ENCODE measurements at regions of chr6 and their contacts with region 1.

Region 1: GRCh38 chr6:35522660-35523658 is 10.3 kb upstream of the TULP1 start:
- DNase-seq: peak; percentile 59
- ATAC-seq: peak; percentile 89
- H3K4me3 ChIP-seq: peak overlapping the region in 2 of 3 experiments; percentile 7 to 55; a peak in 3 of 6 replicates
- H3K27ac ChIP-seq: no peak overlapping the region
- H3K4me1 ChIP-seq: peaks cover 35% of the 10 kb centered on the region
- H3K27me3 ChIP-seq: peaks cover 4 to 27% of the 10 kb centered on the region in 2 experiments; a peak in 2 of 5 replicates
- CTCF ChIP-seq: peak; percentile 97
- EP300 ChIP-seq: no peak
- POLR2A ChIP-seq: no peak
- RAD21 ChIP-seq: peak; percentile 88

Region 2: DNA sequence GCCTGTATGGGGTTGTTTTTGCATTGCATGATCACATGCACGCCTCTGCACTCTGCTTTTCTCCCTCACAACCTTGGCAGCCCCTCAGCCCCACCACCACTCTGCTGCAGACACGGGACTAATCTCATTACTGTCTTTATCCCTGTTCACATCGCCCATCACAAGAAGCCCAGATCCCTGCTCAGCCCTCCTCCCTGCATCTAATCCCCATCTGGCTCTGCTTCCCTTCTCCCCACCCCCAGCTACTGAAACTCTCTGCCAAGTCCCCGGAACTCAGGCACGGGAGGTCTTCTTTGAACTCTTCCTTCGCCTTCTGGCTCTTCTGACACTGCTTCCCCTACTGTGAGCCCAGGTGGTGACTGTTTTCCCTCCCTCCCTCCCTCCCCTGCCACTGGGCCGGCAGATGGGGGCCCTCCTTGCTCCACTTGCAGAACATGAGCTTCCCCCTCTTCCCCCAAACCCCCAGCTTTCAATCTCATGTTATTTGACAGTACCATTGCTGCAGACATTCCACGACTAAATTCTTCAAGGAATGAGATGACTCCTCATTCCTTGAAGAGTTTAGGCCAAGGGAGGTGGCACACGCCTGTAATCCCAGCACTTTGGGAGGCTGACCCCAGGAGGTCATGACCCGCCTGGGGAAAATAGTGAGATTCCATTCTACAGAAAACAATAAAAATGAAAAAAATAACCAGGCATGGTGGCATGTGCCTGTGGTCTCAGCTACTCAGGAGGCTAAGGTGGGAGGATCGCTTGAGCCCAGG is 11.6 kb after region 1 on chr6:
- CTCF ChIA-PET with region 1: no interaction called
- POLR2A ChIA-PET with region 1: no interaction called
- in situ Hi-C with region 1: no loop called
- intact Hi-C with region 1: no loop called
- DNase-seq: no peak
- ATAC-seq: no peak
- H3K4me3 ChIP-seq: no peak overlapping the region
- H3K27ac ChIP-seq: no peak overlapping the region
- H3K4me1 ChIP-seq: no peaks in the 10 kb centered on the region
- H3K27me3 ChIP-seq: peaks cover 0 to 32% of the 10 kb centered on the region in 2 experiments; a peak in 2 of 5 replicates
- CTCF ChIP-seq: no peak
- EP300 ChIP-seq: no peak
- POLR2A ChIP-seq: no peak
- RAD21 ChIP-seq: no peak

Region 3: DNA sequence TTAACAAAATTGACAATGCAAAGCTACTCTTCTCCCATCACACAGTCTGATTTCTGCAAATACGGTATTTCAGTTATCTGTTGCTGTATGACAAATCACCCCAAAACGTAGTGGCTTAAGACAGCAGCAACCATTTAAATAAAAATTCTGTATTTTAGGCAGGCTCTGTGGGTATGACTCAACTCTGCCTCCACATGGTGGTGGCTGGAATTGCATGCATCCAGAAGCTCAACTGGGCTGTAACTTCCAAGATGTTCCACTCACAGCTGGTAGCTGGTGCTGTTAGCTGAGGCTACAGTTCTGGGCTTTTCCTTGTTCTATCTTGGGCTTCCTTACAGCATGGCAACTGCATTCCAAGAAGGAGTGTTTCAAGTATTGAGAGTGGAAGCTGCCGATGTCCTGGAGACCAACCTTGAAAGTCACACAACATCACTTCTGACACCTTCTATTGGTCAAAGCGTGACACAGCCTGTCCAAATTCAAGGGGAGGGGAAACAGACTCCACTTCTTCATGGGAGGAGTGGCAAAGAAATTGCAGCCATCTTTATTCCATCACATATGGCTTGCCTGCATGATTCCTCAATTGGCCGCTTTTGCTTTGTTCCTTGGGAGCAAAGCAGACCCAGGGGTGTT is 29.4 kb after region 1 on chr6:
- CTCF ChIA-PET with region 1: interaction called, 16 read pairs
- POLR2A ChIA-PET with region 1: no interaction called
- in situ Hi-C with region 1: no loop called
- intact Hi-C with region 1: loop called (anchors 1 kb)
- DNase-seq: peak; percentile 40
- ATAC-seq: peak; percentile 57
- H3K4me3 ChIP-seq: no peak overlapping the region
- H3K27ac ChIP-seq: no peak overlapping the region
- H3K4me1 ChIP-seq: peaks cover 7% of the 10 kb centered on the region; the same call in 1 of the 2 replicates
- H3K27me3 ChIP-seq: peaks cover 2 to 12% of the 10 kb centered on the region in 2 experiments; a peak in 3 of 5 replicates
- CTCF ChIP-seq: peak; percentile 82
- EP300 ChIP-seq: no peak
- POLR2A ChIP-seq: no peak
- RAD21 ChIP-seq: no peak

Region 4: GRCh38 chr6:35737413-35738211 is 214.7 kb after region 1 on chr6:
- CTCF ChIA-PET with region 1: interaction called, 15 read pairs
- POLR2A ChIA-PET with region 1: interaction called, 8 read pairs
- in situ Hi-C with region 1: no loop called
- intact Hi-C with region 1: no loop called
- DNase-seq: peak; percentile 87
- ATAC-seq: peak; percentile 63
- H3K4me3 ChIP-seq: peak overlapping the region in 1 of 3 experiments; percentile 30; a peak in 2 of 6 replicates
- H3K27ac ChIP-seq: no peak overlapping the region
- H3K4me1 ChIP-seq: peaks cover 79% of the 10 kb centered on the region
- H3K27me3 ChIP-seq: no peaks in the 10 kb centered on the region
- CTCF ChIP-seq: peak; percentile 89
- EP300 ChIP-seq: peak in 1 of 2 experiments; percentile 62; a peak in 1 of 4 replicates
- POLR2A ChIP-seq: no peak
- RAD21 ChIP-seq: peak; percentile 85